Common myeloid progenitor, CD34-positive (primary cell): ENCODE measurements at regions of chr5 and their contacts with region 1.

Region 1: DNA sequence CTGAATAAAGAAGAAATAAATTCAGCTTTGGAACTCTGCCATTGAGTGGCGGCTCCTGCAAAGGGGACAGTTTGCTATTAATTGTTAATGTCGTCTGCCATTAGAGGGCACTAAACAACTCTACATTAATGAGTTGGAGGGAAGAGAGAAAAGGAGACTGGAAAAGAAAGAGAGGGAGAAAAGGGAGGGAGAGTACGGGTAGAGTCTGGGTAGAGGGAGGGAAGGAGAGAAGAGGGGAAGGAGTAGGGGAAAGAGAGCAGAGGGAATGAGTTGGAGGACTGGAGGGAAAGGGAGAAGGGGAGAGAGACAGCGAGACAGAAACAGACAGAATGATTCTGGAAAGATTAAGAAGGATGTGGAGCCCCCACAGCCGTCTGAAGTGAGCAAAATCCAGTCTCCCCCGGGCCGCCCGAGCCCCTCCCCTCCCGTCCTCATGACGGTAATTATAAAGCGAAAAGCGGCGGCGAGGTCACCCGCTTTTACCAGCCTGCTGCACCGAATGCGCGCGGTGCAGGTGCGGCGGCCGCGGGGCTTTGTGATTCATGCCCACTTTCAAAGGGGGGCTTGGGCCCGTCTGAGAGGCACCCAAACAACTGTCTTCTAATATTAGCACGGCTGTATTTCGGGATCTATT is 1.9 kb upstream of the FST start:
- DNase-seq: peak; percentile 62 to 74 (median 72)
- H3K4me3 ChIP-seq: peak overlapping the region in 6 of 7 experiments; percentile 24 to 71 (median 57)
- H3K27ac ChIP-seq: no peak overlapping the region
- H3K4me1 ChIP-seq: peaks cover 10 to 43% (median 38%) of the 10 kb centered on the region in 4 experiments
- H3K27me3 ChIP-seq: peaks cover 11 to 46% (median 17%) of the 10 kb centered on the region in 5 experiments

Region 2: GRCh38 chr5:53463909-53464621 is 14.5 kb before region 1 on chr5:
- CTCF ChIA-PET with region 1: interaction called, 14 read pairs
- POLR2A ChIA-PET with region 1: no interaction called
- DNase-seq: peak in 2 of 3 donors; percentile 37 to 48
- H3K4me3 ChIP-seq: no peak overlapping the region
- H3K27ac ChIP-seq: no peak overlapping the region
- H3K4me1 ChIP-seq: peaks cover 0 to 12% (median 0%) of the 10 kb centered on the region in 4 experiments
- H3K27me3 ChIP-seq: no peaks in the 10 kb centered on the region